Thyroid gland (tissue), 4 donors: ENCODE measurements at regions of chr1 and their contacts with region 1.

Region 1: GRCh38 chr1:34786521-34787325 is 5.7 kb downstream of the GJB3 start:
- DNase-seq: peak; percentile 80 to 84
- H3K4me3 ChIP-seq: no peak overlapping the region
- H3K27ac ChIP-seq: peak overlapping the region in 1 of 3 donors; percentile 20
- H3K4me1 ChIP-seq: peaks cover under 1 to 23% of the 10 kb centered on the region in 2 donors
- H3K27me3 ChIP-seq: peaks cover 2% of the 10 kb centered on the region
- CTCF ChIP-seq: peak in 5 of 6 experiments; percentile 75 to 95 (median 82)
- POLR2A ChIP-seq: no peak

Region 2: GRCh38 chr1:34852677-34853217 is 66.0 kb after region 1 on chr1:
- intact Hi-C with region 1: loop called (anchors 2 kb)
- DNase-seq: peak; percentile 94 to 96
- H3K4me3 ChIP-seq: no peak overlapping the region
- H3K27ac ChIP-seq: peak overlapping the region in 2 of 3 donors; percentile 37 to 89
- H3K4me1 ChIP-seq: peaks cover 5 to 36% of the 10 kb centered on the region in 2 donors
- H3K27me3 ChIP-seq: no peaks in the 10 kb centered on the region
- CTCF ChIP-seq: peak; percentile 93 to 100 (median 98)
- POLR2A ChIP-seq: no peak

Region 3: GRCh38 chr1:34865981-34866761 is 79.4 kb after region 1 on chr1:
- intact Hi-C with region 1: loop called (anchors 5 kb)
- DNase-seq: peak; percentile 88 to 91
- H3K4me3 ChIP-seq: peak overlapping the region; percentile 32 to 83 (median 47)
- H3K27ac ChIP-seq: peak overlapping the region; percentile 72 to 94 (median 86)
- H3K4me1 ChIP-seq: peaks cover 8 to 11% of the 10 kb centered on the region in 2 donors
- H3K27me3 ChIP-seq: no peaks in the 10 kb centered on the region
- CTCF ChIP-seq: peak; percentile 88 to 99 (median 93)
- POLR2A ChIP-seq: peak in 1 of 2 donors; percentile 60

Region 4: GRCh38 chr1:35005711-35006110 is 219.0 kb after region 1 on chr1:
- intact Hi-C with region 1: no loop called
- DNase-seq: no peak
- H3K4me3 ChIP-seq: no peak overlapping the region
- H3K27ac ChIP-seq: no peak overlapping the region
- H3K4me1 ChIP-seq: no peaks in the 10 kb centered on the region
- H3K27me3 ChIP-seq: no peaks in the 10 kb centered on the region
- CTCF ChIP-seq: no peak
- POLR2A ChIP-seq: no peak